Psoas muscle (tissue), 8 donors: ENCODE measurements at regions of chr5 and their contacts with region 1.

Region 1: GRCh38 chr5:37174928-37175327 is 74.2 kb downstream of the CPLANE1 start:
- DNase-seq: no peak
- ATAC-seq: no peak
- H3K4me3 ChIP-seq: no peak overlapping the region
- H3K27ac ChIP-seq: no peak overlapping the region
- H3K4me1 ChIP-seq: no peaks in the 10 kb centered on the region
- H3K27me3 ChIP-seq: no peaks in the 10 kb centered on the region
- CTCF ChIP-seq: no peak

Region 2: DNA sequence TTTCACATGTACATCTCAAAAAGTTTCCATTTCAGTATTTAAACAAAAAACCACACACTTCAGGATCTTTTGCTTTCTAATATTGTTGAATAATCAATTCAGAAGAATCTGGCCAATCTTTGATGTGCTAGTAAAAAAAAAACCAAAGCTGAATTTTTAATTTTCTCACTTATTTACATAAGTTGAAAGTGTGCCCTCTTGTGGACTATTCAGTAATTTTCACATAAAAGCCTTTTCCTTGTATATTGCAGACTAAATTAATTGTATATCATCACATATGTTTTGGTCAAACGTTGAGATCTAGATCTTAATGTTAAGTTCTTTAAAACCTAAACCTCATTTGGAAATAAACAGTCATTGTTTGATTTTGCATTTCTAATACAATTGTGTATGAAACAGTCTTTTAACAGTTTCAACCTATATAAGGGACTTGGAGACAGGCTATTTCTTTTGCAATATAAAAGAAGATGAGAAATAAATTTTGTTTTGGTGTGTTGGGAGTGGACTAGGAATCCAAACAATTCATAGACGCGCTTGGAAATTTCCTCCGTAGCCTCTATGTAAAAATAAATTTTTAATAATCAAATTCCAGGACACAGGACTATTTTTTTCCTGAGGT is 230.2 kb before region 1 on chr5:
- intact Hi-C with region 1: no loop called
- DNase-seq: no peak
- ATAC-seq: peak in 1 of 4 donors; percentile 43
- H3K4me3 ChIP-seq: no peak overlapping the region
- H3K27ac ChIP-seq: no peak overlapping the region
- H3K4me1 ChIP-seq: peaks cover 67% of the 10 kb centered on the region
- H3K27me3 ChIP-seq: no peaks in the 10 kb centered on the region
- CTCF ChIP-seq: peak; percentile 61

Region 3: DNA sequence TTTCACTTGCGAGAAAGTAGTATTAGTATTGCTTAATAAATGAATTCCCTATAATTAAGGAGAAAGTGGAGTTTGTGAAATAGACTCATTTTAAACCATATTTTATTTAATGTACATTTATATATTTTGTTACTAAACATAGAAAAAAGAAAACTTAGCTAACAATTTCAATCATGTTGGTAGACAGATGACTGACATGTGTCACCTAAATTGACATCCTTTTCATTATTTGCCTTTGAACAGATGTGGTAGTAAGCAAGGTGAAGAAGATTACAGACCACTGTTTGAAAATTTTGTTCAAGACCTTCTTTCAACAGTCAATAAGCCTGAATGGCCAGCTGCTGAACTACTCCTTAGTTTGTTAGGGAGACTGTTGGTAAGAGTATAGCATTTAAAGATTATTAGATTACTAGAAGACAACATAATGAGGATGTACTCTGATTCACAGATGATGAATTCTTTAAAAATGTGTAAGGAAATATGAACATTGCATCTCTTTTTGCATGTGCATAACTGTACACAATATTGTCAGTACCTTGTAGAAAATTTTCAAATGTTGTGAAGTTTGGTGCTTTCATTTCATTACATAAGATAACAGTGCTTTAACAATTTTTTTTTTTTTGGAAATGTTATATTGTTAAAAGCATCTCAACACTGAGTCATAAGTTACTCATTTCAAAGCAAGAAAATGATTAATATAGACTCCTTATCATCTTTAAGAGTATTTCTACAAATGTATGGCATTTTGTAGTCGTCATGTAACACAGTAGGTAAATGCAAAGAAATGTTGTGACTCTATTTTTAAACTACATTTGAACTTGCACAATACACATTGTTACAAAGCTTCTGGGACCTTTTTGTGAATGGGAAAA is 158.9 kb before region 1 on chr5:
- intact Hi-C with region 1: loop called (anchors 5 to 10 kb)
- DNase-seq: no peak
- ATAC-seq: no peak
- H3K4me3 ChIP-seq: no peak overlapping the region
- H3K27ac ChIP-seq: no peak overlapping the region
- H3K4me1 ChIP-seq: no peaks in the 10 kb centered on the region
- H3K27me3 ChIP-seq: no peaks in the 10 kb centered on the region
- CTCF ChIP-seq: no peak

Region 4: GRCh38 chr5:37208883-37209797 is 34.2 kb after region 1 on chr5:
- intact Hi-C with region 1: no loop called
- DNase-seq: peak; percentile 34 to 68
- ATAC-seq: peak in 1 of 4 donors; percentile 59
- H3K4me3 ChIP-seq: peak overlapping the region; percentile 32
- H3K27ac ChIP-seq: no peak overlapping the region
- H3K4me1 ChIP-seq: no peaks in the 10 kb centered on the region
- H3K27me3 ChIP-seq: no peaks in the 10 kb centered on the region
- CTCF ChIP-seq: no peak

Region 5: GRCh38 chr5:37222176-37222575 is 47.2 kb after region 1 on chr5:
- intact Hi-C with region 1: loop called (anchors 10 kb)
- DNase-seq: no peak
- ATAC-seq: no peak
- H3K4me3 ChIP-seq: no peak overlapping the region
- H3K27ac ChIP-seq: no peak overlapping the region
- H3K4me1 ChIP-seq: no peaks in the 10 kb centered on the region
- H3K27me3 ChIP-seq: no peaks in the 10 kb centered on the region
- CTCF ChIP-seq: no peak

Region 6: GRCh38 chr5:37308796-37309195 is 133.9 kb after region 1 on chr5:
- intact Hi-C with region 1: loop called in 1 of 2 experiments (anchors 10 kb)
- DNase-seq: no peak
- ATAC-seq: no peak
- H3K4me3 ChIP-seq: no peak overlapping the region
- H3K27ac ChIP-seq: no peak overlapping the region
- H3K4me1 ChIP-seq: no peaks in the 10 kb centered on the region
- H3K27me3 ChIP-seq: no peaks in the 10 kb centered on the region
- CTCF ChIP-seq: no peak

Region 7: GRCh38 chr5:37326536-37326935 is 151.6 kb after region 1 on chr5:
- intact Hi-C with region 1: loop called in 1 of 2 experiments (anchors 5 kb)
- DNase-seq: no peak
- ATAC-seq: no peak
- H3K4me3 ChIP-seq: no peak overlapping the region
- H3K27ac ChIP-seq: no peak overlapping the region
- H3K4me1 ChIP-seq: no peaks in the 10 kb centered on the region
- H3K27me3 ChIP-seq: no peaks in the 10 kb centered on the region
- CTCF ChIP-seq: no peak